Endothelial cell of umbilical vein (primary cell): ENCODE measurements at regions of chr7 and their contacts with region 1.

Region 1: DNA sequence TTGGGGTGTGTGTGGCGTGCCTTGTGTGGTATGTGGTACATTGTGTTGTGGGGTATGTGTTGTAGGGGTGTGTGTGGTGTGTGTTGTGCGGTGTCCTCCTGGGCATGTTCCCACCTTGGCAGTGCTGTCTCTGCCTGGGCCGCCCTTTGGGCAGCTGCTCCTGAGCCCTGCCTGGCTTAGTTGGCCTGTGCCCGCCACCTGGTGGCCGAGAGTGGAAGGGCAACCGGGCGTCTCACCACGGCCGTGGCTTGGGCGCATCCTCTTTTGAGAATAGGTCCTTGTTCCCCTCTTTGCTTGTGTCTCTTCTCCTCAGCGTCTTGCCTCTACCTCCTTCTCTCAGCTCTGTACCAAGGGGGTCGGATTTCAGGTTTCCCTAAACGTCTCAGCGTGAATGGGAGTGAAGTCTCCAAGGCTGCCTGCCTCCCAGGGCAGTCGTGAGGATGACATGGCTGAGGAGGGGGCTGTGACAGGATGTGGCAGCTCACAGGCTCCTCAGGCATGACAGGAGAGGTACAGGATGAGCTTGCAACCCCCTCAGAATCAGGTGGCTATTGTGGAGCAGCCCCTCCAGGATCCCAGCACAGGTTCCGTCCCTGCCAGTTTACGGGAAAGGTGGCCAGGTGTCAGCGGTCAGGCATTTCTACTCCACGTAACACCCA is 98.4 kb upstream of the PODXL start:
- DNase-seq: peak; percentile 75
- H3K4me3 ChIP-seq: no peak overlapping the region
- H3K27ac ChIP-seq: no peak overlapping the region
- H3K4me1 ChIP-seq: peaks cover 20% of the 10 kb centered on the region
- H3K27me3 ChIP-seq: no peaks in the 10 kb centered on the region
- CTCF ChIP-seq: peak; percentile 92 to 97
- POLR2A ChIP-seq: no peak

Region 2: DNA sequence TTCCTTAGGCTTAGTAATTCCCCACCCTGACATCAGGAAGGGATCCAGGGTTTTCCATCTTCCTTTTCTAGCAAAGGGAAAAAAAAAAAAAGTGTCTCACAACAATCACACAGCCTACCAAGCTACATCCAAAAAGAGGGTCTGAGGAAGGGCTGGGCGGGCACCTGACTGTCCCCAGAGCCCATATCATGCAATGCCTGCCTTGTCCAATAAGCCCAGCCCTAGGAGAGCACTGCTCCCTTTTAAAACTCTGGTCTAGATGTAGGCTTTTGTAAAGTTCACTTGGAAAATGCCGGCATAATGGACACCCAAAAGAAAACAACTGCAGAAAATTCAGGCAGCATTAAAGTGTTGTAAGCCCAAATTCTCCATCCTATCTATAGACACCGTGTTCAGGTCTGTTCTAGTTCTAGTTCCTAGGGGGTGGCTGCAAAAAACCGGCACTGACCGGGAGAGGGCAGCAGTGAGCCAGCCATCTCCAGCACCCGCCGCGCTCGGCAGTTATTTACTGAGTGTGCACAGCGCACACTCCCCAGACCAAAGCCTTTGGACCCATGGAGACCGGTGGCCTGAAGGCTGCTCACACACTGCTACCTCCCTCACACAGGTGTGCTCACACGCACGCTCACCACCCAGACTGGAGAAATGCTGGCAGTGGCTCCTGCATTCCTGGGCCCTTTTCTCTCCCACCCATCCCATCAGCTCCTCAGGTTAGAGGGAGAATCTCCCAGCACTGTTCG is 147.0 kb before region 1 on chr7:
- CTCF ChIA-PET with region 1: interaction called, 79 read pairs
- POLR2A ChIA-PET with region 1: interaction called, 4 read pairs
- dilution Hi-C with region 1: no loop called
- intact Hi-C with region 1: loop called (anchors 1 kb)
- DNase-seq: peak; percentile 76
- H3K4me3 ChIP-seq: no peak overlapping the region
- H3K27ac ChIP-seq: no peak overlapping the region
- H3K4me1 ChIP-seq: peaks cover 18% of the 10 kb centered on the region
- H3K27me3 ChIP-seq: no peaks in the 10 kb centered on the region
- CTCF ChIP-seq: peak; percentile 87 to 90
- POLR2A ChIP-seq: no peak

Region 3: GRCh38 chr7:131540441-131541162 is 114.2 kb before region 1 on chr7:
- CTCF ChIA-PET with region 1: interaction called, 18 read pairs
- POLR2A ChIA-PET with region 1: no interaction called
- dilution Hi-C with region 1: no loop called
- intact Hi-C with region 1: loop called (anchors 1 kb)
- DNase-seq: peak; percentile 89
- H3K4me3 ChIP-seq: no peak overlapping the region
- H3K27ac ChIP-seq: peak overlapping the region; percentile 74
- H3K4me1 ChIP-seq: peaks cover 50% of the 10 kb centered on the region
- H3K27me3 ChIP-seq: no peaks in the 10 kb centered on the region
- CTCF ChIP-seq: peak; percentile 8 to 24
- POLR2A ChIP-seq: no peak

Region 4: DNA sequence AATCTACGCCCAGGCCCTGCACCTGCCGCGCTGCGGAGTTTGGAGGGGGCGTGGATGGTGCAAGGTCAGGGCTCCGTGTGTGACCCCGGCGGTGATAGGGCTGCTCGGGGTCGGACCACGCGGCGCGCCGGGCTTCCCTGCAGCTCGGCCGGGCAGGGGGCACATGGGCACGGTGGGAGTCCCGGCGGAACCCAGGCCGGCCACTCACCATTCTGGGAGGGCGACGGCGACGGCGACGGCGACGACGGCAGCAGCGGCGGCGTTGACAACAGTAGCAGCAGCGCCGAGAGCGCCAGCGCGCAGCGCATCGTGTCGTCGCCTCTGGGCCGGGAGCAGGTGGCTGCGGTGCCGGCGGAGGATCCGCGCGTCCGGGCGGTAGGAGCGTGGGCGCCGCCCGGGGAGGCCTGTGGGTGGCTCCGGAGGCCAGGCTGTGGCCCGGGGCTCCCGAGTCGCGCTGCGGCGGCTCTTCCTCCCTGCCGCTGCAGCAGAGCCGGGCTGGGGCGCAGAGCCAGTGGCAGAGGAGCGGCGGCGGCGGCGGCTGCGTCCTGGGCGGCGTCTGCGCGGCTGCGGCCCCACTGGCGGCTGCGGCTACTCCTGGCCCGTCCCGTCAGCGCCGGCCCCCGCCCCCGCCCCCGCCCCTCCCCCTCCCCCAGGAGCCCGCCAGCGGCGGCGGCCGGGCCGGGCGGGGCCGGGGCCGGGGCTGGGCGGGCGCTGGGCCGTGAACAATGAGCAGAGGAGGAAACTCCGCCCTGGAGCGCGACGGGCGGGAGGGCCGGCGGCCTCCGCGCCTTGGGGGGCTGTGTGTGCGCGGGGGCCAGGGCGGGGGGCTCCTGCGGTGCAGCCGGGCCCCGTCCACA is 98.5 kb before region 1 on chr7 and contains the start of gene PODXL:
- CTCF ChIA-PET with region 1: interaction called, 15 read pairs
- POLR2A ChIA-PET with region 1: no interaction called
- dilution Hi-C with region 1: no loop called
- intact Hi-C with region 1: loop called (anchors 1 kb)
- DNase-seq: peak; percentile 75
- H3K4me3 ChIP-seq: peak within 1 kb of the TSS; percentile 78 to 82 (median 79)
- H3K27ac ChIP-seq: peak within 1 kb of the TSS; percentile 68
- H3K4me1 ChIP-seq: peaks cover 29% of the 10 kb centered on the region
- H3K27me3 ChIP-seq: no peaks in the 10 kb centered on the region
- CTCF ChIP-seq: no peak
- POLR2A ChIP-seq: peak; percentile 75
- total RNA-seq, gene PODXL: 156 and 264 TPM in 2 replicates

Region 5: DNA sequence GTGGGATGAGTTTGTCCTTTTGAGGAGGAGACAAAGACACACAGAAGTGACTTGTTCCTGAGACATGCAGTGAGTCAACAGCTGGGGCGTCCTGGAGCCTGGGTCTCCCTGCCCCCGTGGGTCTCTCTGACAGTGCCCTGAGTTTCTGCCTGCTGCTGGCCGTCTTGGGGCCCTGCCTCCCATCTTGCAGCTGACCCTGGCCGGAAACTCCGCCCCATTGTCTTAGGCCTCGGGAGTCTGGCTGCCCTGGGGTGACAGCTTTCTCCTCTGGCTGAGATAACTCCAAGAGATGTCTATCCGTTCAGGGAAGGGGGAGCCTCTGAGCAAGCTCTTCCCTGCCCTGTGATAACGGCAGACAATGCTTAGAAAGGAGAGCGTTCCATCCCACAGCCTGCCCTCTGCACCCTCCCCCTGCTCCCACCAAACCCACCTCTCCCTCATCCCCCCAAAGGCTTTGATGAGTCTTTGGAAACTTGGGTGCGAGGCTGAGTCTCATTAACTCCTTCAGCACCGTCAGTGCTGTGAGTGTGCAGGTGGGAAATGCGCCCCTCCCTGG is 28.9 kb before region 1 on chr7:
- CTCF ChIA-PET with region 1: interaction called, 10 read pairs
- POLR2A ChIA-PET with region 1: no interaction called
- dilution Hi-C with region 1: no loop called
- intact Hi-C with region 1: loop called (anchors 1 kb)
- DNase-seq: peak; percentile 76
- H3K4me3 ChIP-seq: no peak overlapping the region
- H3K27ac ChIP-seq: peak overlapping the region; percentile 96
- H3K4me1 ChIP-seq: peaks cover 73% of the 10 kb centered on the region
- H3K27me3 ChIP-seq: no peaks in the 10 kb centered on the region
- CTCF ChIP-seq: no peak
- POLR2A ChIP-seq: no peak